OCI-LY7 (cell line): ENCODE measurements at regions of chr1 and their contacts with region 1.

Region 1: DNA sequence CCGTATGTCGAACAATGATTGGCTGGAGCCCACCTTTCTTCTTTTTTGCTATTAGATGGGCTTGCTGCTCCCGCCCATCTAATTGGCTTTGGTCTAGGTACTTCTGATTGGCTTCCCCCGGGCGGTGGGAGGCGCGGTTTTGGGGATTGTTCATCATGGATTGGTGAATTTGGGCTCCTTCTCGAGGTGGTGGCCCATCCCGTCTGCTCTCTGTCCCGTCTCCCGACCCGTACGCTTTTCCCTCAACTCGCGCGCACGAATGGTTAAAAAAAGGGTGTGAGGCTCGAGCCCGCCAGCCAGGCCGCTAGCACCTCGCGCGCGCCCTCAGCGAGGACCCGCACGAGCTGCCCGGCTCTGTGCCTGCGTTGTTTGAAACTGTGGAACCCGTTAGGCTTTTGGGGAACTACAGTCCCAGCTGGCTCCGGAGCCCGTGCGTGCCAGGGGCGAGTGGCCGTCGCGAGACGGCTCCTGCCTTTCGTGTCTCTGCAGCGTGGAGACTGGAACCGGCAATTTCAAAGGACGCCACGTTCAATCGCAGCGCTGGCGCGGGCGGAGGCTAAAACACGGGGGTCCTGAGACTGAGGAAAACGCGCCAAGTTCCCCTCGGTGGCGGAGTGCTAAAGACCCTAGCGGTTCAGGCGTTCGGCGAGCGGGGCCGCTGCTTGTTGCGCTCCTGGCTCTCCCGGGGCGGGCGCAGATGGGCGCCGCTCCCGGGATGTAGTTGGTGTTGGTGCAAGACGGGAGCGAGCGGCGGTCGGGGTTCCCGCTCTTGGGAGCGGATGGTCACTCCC is at the start of gene USP1:
- DNase-seq: peak; percentile 99
- H3K4me3 ChIP-seq: peak within 1 kb of the TSS; percentile 94
- H3K27ac ChIP-seq: peak within 1 kb of the TSS; percentile 95
- H3K4me1 ChIP-seq: peaks cover 44% of the 10 kb centered on the region
- CTCF ChIP-seq: no peak
- total RNA-seq, gene USP1: 69.6 and 82.7 TPM in 2 replicates

Region 2: DNA sequence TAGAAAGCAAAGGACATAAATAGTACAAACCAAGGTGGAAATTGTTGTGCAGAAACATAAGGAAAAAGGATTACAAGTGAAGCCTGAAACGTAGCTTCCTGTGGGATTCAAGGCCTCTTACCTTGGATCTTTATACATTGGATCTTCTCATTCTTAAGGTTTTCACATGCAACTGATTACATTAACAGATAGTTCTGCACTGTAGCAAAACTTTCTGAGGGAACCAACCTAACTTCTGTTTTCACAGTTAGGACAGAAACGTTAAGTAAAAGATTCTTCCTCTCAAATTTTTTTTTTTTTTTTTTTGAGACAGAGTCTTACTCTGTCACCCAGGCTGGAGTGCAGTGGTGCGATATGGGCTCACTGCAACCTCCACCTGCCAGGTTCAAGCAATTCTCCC is 703.9 kb before region 1 on chr1:
- CTCF ChIA-PET with region 1: no interaction called
- POLR2A ChIA-PET with region 1: no interaction called
- intact Hi-C with region 1: loop called (anchors 5 kb)
- DNase-seq: no peak
- H3K4me3 ChIP-seq: no peak overlapping the region
- H3K27ac ChIP-seq: no peak overlapping the region
- H3K4me1 ChIP-seq: peaks cover 26% of the 10 kb centered on the region
- CTCF ChIP-seq: no peak

Region 3: DNA sequence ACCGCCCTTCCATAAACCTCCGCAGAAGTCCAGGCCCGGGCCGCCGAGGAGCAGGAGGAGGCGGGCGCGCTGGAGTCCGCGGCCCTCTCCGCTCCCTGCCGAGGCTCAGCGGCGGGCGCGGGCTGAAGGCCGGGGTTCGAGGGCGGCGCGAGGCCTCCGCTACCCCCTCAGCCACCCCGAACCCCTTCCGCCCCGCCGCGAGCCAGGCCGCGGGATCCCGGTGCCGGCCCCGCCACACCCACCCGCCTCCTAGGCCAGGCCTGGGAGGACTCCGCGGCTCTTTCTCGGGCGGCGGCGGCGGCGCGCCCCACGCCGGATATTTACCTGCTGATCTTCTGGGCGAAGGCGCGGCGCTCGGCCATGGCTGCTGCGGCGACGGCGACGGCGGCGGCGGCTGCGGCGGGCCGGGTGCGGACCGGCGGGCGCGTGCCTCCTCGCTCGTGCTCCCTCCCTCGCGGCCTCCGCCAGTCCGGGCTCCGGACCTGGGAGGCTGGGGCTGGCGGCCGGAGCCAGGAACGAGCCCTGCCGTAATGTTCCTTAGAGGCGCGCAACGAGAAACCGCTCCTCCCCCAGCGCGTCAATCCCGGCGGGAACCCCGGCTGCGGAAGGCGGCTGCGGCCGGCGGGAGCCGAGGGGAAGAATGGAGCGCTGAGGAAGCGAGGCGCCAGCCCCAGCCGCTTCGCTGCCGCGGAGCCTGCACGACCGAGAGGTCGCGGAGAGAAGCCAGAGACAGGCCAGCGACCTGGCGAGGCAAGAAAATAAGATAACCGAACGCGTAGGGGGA is 251.4 kb after region 1 on chr1 and contains the start of gene DOCK7:
- CTCF ChIA-PET with region 1: no interaction called
- POLR2A ChIA-PET with region 1: no interaction called
- intact Hi-C with region 1: loop called (anchors 5 kb)
- DNase-seq: peak; percentile 73
- H3K4me3 ChIP-seq: peak within 1 kb of the TSS; percentile 72
- H3K27ac ChIP-seq: peak within 1 kb of the TSS; percentile 14
- H3K4me1 ChIP-seq: peaks cover 15% of the 10 kb centered on the region
- CTCF ChIP-seq: no peak
- total RNA-seq, gene DOCK7: 20.3 and 30.7 TPM in 2 replicates

Region 4: DNA sequence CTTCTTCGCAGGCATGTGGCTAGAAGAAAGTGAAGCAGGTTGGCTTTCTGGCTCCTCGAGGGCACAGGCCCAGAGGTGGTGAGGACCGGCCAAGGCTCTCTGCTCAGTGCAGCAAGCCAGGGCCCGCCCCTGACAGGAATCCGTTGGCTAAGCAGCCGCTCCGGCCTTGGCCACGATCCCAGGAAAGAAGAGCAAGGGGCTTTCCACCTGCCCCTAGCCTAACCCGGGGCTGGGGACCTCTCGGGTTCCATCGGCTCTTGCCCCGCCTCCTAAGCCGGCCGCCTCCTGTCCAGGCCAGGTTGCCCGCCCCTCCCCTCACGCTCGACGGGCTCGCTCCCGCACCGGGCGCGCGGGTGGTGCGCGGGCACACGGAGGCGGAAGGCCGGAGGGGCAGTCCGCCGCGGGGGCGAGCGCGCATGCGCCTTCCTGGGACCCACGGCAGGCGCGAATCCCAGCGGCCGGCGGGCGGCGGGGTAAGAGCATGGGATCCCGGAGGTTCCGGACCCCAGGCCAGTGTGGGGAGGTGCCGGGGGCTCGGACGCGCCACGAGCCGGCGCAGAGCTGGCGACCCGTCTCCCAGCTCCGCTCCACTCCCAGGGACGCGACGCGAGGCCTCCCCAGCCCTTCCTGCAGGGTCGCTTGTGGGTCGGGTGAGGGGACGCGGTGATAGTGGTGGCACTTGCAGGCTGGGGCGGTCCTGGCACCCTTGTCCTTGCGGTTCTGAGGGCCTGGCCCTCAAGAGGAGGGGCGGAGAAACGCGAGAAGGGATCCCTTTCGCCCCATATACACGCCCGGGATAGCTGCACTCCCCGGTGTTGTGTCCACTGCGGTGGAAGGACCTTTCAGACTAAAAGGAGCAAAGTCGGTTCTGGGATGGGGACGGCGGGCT is 930.8 kb after region 1 on chr1 and contains the start of gene ALG6:
- CTCF ChIA-PET with region 1: no interaction called
- POLR2A ChIA-PET with region 1: no interaction called
- intact Hi-C with region 1: loop called (anchors 5 kb)
- DNase-seq: peak; percentile 94
- H3K4me3 ChIP-seq: peak within 1 kb of the TSS; percentile 90
- H3K27ac ChIP-seq: peak within 1 kb of the TSS; percentile 37
- H3K4me1 ChIP-seq: peaks cover 6% of the 10 kb centered on the region
- CTCF ChIP-seq: no peak
- total RNA-seq, gene ALG6: 29.3 TPM in 2 replicates

Region 5: GRCh38 chr1:63828322-63829044 is 1391.8 kb after region 1 on chr1:
- CTCF ChIA-PET with region 1: no interaction called
- POLR2A ChIA-PET with region 1: no interaction called
- intact Hi-C with region 1: loop called (anchors 5 kb)
- DNase-seq: peak; percentile 86
- H3K4me3 ChIP-seq: peak overlapping the region; percentile 41
- H3K27ac ChIP-seq: peak overlapping the region; percentile 90
- H3K4me1 ChIP-seq: peaks cover 61% of the 10 kb centered on the region
- CTCF ChIP-seq: no peak